ENCODE measurements at regions of chr3 and their contacts with region 1.

Region 1: GRCh38 chr3:123620343-123620742 is 35.5 kb upstream of the HACD2 start:
- DNase-seq: peak in 30 of 42 donors; percentile 14 to 71 (median 44)

Region 2: GRCh38 chr3:123584988-123585937 is 35.1 kb before region 1 on chr3 and contains the start of gene HACD2:
- intact Hi-C with region 1: loop called (anchors 5 kb)
- DNase-seq: peak; percentile 92 to 99 (median 97)